ENCODE measurements at regions of chr10 and their contacts with region 1.

Region 1: DNA sequence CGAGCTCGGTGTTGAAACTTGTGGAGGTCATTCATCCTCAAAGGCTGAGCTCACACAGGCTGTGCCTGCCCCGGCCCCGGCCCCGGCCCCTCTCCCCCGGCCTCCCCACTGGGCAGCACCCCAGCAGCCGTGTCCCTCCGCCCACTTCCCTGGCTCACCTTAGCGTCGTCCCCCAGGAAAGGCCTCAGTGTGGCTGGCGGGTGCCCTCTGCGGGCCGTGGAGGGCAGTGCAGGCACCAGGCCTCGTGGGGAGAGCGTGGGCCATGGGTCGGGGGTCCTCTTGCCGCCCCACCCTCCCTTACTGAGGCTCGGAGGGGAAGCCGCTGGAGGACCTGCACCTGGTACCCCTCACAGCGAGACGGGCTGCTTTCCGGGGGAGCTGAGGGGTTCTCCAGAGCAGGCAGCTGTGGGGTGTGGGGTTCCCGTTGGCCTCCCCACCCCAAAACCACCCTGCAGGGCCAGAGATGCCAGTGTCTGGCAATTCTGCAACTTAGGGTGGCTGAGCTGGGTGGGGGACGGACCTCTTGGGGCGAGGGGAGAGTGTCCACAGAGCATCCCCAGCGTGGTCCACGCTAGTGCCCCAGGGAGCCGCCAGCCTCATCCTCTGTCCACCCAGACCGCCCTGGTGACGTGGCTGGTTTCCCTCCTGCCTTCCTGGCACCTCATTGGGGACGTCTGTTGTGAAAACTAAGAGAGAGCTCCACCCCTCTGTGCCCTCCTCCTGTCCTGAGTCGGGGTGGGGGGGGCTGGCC is 44.2 kb upstream of the DPYSL4 start:
- DNase-seq: peak; percentile 64 to 78
- H3K4me3 ChIP-seq: no peak overlapping the region
- H3K4me3 Mint-ChIP-seq: no peak overlapping the region
- H3K27ac Mint-ChIP-seq: no peak overlapping the region
- H3K4me1 ChIP-seq: no peaks in the 10 kb centered on the region
- H3K4me1 Mint-ChIP-seq: no peaks in the 10 kb centered on the region
- H3K27me3 ChIP-seq: no peaks in the 10 kb centered on the region
- H3K27me3 Mint-ChIP-seq: no peaks in the 10 kb centered on the region
- CTCF ChIP-seq: peak; percentile 94 to 95

Region 2: GRCh38 chr10:131885391-131886161 is 257.0 kb before region 1 on chr10:
- CTCF ChIA-PET with region 1: no interaction called
- POLR2A ChIA-PET with region 1: no interaction called
- intact Hi-C with region 1: loop called (anchors 1 kb)
- DNase-seq: peak in 1 of 2 experiments; percentile 68
- H3K4me3 ChIP-seq: no peak overlapping the region
- H3K4me3 Mint-ChIP-seq: no peak overlapping the region
- H3K27ac Mint-ChIP-seq: no peak overlapping the region
- H3K4me1 ChIP-seq: no peaks in the 10 kb centered on the region
- H3K4me1 Mint-ChIP-seq: no peaks in the 10 kb centered on the region
- H3K27me3 ChIP-seq: no peaks in the 10 kb centered on the region
- H3K27me3 Mint-ChIP-seq: no peaks in the 10 kb centered on the region
- CTCF ChIP-seq: peak; percentile 75 to 78

Region 3: GRCh38 chr10:131981429-131982184 is 161.0 kb before region 1 on chr10 and contains the start of gene BNIP3:
- CTCF ChIA-PET with region 1: no interaction called
- POLR2A ChIA-PET with region 1: no interaction called
- intact Hi-C with region 1: loop called (anchors 10 kb)
- DNase-seq: peak; percentile 90 to 94
- H3K4me3 ChIP-seq: peak within 1 kb of the TSS; percentile 78
- H3K4me3 Mint-ChIP-seq: peak within 1 kb of the TSS; percentile 75
- H3K27ac Mint-ChIP-seq: no peak within 1 kb of the TSS
- H3K4me1 ChIP-seq: no peaks in the 10 kb centered on the region
- H3K4me1 Mint-ChIP-seq: no peaks in the 10 kb centered on the region
- H3K27me3 ChIP-seq: no peaks in the 10 kb centered on the region
- H3K27me3 Mint-ChIP-seq: no peaks in the 10 kb centered on the region
- CTCF ChIP-seq: no peak
- total RNA-seq, gene BNIP3: 16.5 and 18.4 TPM in 2 replicates

Region 4: GRCh38 chr10:132048294-132048667 is 94.3 kb before region 1 on chr10:
- CTCF ChIA-PET with region 1: interaction called, 4 read pairs
- POLR2A ChIA-PET with region 1: no interaction called
- intact Hi-C with region 1: loop called (anchors 5 kb)
- DNase-seq: no peak
- H3K4me3 ChIP-seq: no peak overlapping the region
- H3K4me3 Mint-ChIP-seq: no peak overlapping the region
- H3K27ac Mint-ChIP-seq: no peak overlapping the region
- H3K4me1 ChIP-seq: no peaks in the 10 kb centered on the region
- H3K4me1 Mint-ChIP-seq: no peaks in the 10 kb centered on the region
- H3K27me3 ChIP-seq: no peaks in the 10 kb centered on the region
- H3K27me3 Mint-ChIP-seq: peaks cover 20% of the 10 kb centered on the region
- CTCF ChIP-seq: no peak

Region 5: DNA sequence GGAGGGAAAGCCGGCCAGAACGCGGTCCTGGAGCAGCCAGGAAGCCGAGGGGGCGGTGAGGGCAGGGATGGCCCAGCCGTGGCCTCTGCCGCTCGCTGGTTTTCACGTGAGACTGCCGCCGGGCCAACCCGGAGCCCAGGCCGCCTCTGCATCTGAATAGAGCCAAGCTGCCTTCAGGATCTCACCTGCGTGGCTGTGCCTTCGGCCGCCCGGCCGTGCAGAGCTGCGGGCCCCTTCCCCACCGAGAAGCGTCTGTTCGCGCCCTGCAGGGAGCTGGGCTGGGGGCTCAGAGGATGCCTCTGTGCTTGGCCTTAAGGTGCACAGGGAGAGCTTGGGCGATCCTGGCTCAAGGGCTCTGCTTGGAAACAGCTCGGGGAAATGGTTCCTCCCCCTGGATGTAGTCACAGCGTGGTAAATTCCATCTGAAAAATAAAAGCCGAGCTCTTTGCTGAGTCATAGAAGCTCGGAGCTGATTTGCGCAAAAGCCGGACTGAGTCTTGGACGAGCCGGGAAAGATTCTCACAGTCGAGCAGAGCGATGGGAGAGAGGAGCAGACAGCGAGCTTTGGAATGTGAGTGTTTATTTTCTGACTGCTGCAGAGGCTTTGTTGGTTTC is 77.0 kb before region 1 on chr10 and contains the start of gene JAKMIP3:
- CTCF ChIA-PET with region 1: interaction called, 11 read pairs
- POLR2A ChIA-PET with region 1: no interaction called
- intact Hi-C with region 1: no loop called
- DNase-seq: peak; percentile 55 to 65
- H3K4me3 ChIP-seq: peak within 1 kb of the TSS; percentile 21
- H3K4me3 Mint-ChIP-seq: peak within 1 kb of the TSS; percentile 78
- H3K27ac Mint-ChIP-seq: peak within 1 kb of the TSS; percentile 79
- H3K4me1 ChIP-seq: no peaks in the 10 kb centered on the region; the same call in 1 of the 2 replicates
- H3K4me1 Mint-ChIP-seq: no peaks in the 10 kb centered on the region
- H3K27me3 ChIP-seq: no peaks in the 10 kb centered on the region
- H3K27me3 Mint-ChIP-seq: peaks cover 8% of the 10 kb centered on the region
- CTCF ChIP-seq: no peak
- total RNA-seq, gene JAKMIP3: 0.50 and 0.53 TPM in 2 replicates

Region 6: DNA sequence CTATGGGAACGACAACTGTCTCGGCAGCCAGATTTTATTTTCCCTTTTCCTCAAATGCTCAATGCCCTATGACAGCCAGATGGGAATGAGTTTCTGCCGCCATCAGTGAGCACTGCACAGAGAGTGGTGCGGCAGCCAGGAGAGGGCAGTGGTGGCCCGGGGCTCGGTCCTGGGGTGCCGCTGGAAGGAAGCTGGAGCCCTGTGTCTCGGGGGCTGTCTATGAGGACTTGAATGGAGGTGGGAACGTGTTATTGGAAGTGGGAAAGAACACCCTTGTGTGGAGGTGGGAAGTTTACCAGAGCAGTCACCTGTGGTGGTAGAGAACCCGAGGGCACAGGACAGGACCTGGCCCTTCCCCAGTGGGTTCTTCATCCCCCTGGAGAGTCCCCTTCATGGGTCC is 41.1 kb before region 1 on chr10:
- CTCF ChIA-PET with region 1: interaction called, 3 read pairs
- POLR2A ChIA-PET with region 1: no interaction called
- intact Hi-C with region 1: loop called (anchors 1 kb)
- DNase-seq: peak; percentile 26 to 30
- H3K4me3 ChIP-seq: no peak overlapping the region
- H3K4me3 Mint-ChIP-seq: no peak overlapping the region
- H3K27ac Mint-ChIP-seq: no peak overlapping the region
- H3K4me1 ChIP-seq: peaks cover 6% of the 10 kb centered on the region; the same call in 1 of the 2 replicates
- H3K4me1 Mint-ChIP-seq: no peaks in the 10 kb centered on the region
- H3K27me3 ChIP-seq: no peaks in the 10 kb centered on the region
- H3K27me3 Mint-ChIP-seq: no peaks in the 10 kb centered on the region
- CTCF ChIP-seq: peak in 1 of 2 experiments; percentile 46

Region 7: DNA sequence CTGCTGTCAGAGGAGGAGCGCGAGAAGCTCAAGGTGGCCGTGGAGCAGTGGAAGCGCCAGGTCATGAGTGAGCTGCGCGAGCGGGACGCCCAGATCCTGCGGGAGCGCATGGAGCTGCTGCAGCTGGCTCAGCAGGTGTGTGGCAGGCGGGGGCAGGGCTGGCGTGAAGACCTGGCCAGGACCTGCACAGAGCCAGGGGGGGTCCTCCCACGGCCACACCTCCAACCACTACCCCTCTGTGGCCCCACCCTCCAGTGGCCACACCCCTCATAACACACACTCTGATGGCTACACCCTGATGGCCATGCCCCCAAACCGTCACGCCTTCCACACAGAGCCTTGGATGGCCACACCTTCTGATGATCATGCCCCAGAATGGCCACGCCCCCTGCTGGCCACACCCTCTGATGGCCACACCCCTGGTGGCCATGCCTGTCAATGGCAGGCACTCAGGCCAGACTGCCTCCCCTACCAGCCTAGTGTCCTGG is 20.7 kb after region 1 on chr10:
- CTCF ChIA-PET with region 1: no interaction called
- POLR2A ChIA-PET with region 1: no interaction called
- intact Hi-C with region 1: no loop called
- DNase-seq: peak in 1 of 2 experiments; percentile 51
- H3K4me3 ChIP-seq: no peak overlapping the region
- H3K4me3 Mint-ChIP-seq: no peak overlapping the region
- H3K27ac Mint-ChIP-seq: no peak overlapping the region
- H3K4me1 ChIP-seq: no peaks in the 10 kb centered on the region
- H3K4me1 Mint-ChIP-seq: no peaks in the 10 kb centered on the region
- H3K27me3 ChIP-seq: no peaks in the 10 kb centered on the region
- H3K27me3 Mint-ChIP-seq: peaks cover 8% of the 10 kb centered on the region
- CTCF ChIP-seq: peak; percentile 15 to 43

Measured in Caco-2 (cell line).